Kidney (tissue), 22 donors: ENCODE measurements at regions of chr12 and their contacts with region 1.

Region 1: GRCh38 chr12:91332302-91332701 is 149.7 kb upstream of the DCN start:
- DNase-seq: peak in 2 of 5 donors; percentile 13 to 42
- H3K4me3 ChIP-seq: no peak overlapping the region
- H3K27ac ChIP-seq: no peak overlapping the region
- H3K4me1 ChIP-seq: no peaks in the 10 kb centered on the region
- H3K27me3 ChIP-seq: no peaks in the 10 kb centered on the region
- CTCF ChIP-seq: no peak

Region 2: GRCh38 chr12:90978117-90978770 is 354.1 kb before region 1 on chr12:
- intact Hi-C with region 1: loop called (anchors 10 kb)
- DNase-seq: peak in 2 of 5 donors; percentile 74 to 84
- H3K4me3 ChIP-seq: no peak overlapping the region
- H3K27ac ChIP-seq: no peak overlapping the region
- H3K4me1 ChIP-seq: no peaks in the 10 kb centered on the region
- H3K27me3 ChIP-seq: no peaks in the 10 kb centered on the region
- CTCF ChIP-seq: peak; percentile 59

Region 3: DNA sequence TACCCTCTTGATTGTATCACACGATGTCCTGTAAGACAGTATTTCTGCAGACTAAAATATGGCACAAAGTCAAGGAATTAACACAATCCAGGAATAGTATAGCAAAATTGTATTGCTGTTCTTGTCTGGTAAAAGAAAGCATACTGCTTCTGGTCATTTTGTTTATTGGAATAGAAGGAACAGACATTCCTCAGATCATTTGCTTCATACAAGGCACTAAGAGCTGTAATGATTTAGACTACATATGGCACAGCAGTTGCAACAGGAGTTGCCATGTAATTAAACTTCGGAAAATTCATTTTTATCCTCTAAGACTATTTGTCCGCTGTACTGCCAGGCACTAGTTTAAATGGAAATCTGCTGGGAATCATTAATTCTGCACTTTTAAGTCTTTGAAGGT is 266.9 kb before region 1 on chr12:
- intact Hi-C with region 1: no loop called
- DNase-seq: no peak
- H3K4me3 ChIP-seq: no peak overlapping the region
- H3K27ac ChIP-seq: no peak overlapping the region
- H3K4me1 ChIP-seq: no peaks in the 10 kb centered on the region
- H3K27me3 ChIP-seq: no peaks in the 10 kb centered on the region
- CTCF ChIP-seq: no peak